ENCODE measurements at regions of chr2 and their contacts with region 1.

Region 1: DNA sequence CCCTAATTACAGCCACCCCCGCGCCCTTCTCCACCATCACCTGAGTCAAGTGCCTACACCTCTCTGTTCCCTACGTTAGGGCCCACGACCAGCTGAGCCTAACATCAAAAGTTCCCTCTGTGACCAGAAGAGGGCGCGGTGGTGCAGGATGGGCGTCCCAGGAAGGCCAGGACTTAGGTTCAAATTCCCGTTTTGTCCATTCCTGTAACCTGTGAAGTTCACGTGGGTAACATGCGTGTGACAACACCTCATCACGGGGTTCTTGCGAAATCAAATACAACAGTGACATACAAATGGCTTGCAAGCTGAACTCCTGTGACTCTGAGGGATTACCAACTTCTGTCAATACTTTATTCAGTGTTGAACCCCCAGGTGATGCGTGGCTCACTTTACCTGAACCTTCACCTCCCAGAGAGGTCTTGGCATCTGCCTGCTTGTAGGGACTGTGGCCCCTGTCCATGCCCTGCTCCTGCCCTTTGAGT is 207.9 kb downstream of the ARL4C start:
- DNase-seq: peak; percentile 62 to 89
- H3K4me3 ChIP-seq: no peak overlapping the region
- H3K4me1 ChIP-seq: no peaks in the 10 kb centered on the region
- H3K27me3 ChIP-seq: no peaks in the 10 kb centered on the region

Region 2: GRCh38 chr2:233976690-233977294 is 312.2 kb before region 1 on chr2:
- in situ Hi-C with region 1: no loop called
- DNase-seq: peak in 1 of 2 experiments; percentile 11
- H3K4me3 ChIP-seq: no peak overlapping the region
- H3K4me1 ChIP-seq: no peaks in the 10 kb centered on the region
- H3K27me3 ChIP-seq: peaks cover 10% of the 10 kb centered on the region; the same call in 1 of the 2 replicates

Region 3: DNA sequence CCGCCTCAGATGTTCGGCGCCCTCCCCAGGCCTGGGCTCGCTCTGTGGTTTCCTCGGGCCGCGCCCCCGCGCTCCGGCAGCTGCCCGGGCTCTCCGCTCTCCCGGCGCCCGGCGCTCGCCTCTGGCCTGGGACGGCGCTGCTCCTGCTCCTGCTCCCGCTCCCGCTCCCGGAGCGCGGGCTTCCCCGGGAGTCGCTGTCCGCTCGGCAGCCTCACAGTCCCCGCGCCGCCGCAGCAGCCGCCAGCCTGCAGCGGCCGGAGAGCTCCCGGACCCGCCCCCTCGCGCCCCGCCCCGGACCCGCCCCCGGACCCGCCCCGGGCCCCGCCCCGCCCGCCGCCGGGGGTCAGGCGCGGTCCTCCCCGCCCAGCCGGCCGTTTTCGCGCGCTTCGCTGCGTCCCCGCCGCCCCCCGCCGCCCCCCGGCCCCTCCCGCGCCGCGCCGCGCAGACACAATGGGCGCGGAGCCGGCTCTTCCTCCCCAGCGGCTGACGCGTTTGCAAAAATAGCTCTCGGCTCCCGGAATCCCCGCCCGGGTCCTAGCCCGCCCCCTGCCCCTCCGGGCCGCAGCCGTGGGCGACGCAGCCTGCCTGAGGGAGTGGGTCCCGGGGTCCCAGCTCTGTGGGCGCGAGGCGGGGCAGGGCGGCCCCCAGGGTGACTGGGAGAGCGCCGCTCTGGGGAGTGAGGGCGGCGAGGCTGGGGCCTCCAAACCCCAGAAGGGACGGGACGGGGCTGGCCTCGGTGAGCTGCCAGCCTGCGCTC is 208.0 kb after region 1 on chr2 and contains the start of gene ARL4C:
- in situ Hi-C with region 1: loop called (anchors 5 kb)
- DNase-seq: peak; percentile 60 to 80
- H3K4me3 ChIP-seq: peak within 1 kb of the TSS; percentile 61
- H3K4me1 ChIP-seq: peaks cover 9% of the 10 kb centered on the region
- H3K27me3 ChIP-seq: no peaks in the 10 kb centered on the region

Region 4: GRCh38 chr2:235106874-235107639 is 818.0 kb after region 1 on chr2:
- in situ Hi-C with region 1: loop called (anchors 25 kb)
- DNase-seq: peak; percentile 60 to 72
- H3K4me3 ChIP-seq: no peak overlapping the region
- H3K4me1 ChIP-seq: no peaks in the 10 kb centered on the region
- H3K27me3 ChIP-seq: no peaks in the 10 kb centered on the region

Measured in HAP-1 (cell line).